Activated naive CD4-positive, alpha-beta T cell treated with anti-CD3 and anti-CD28 coated beads for 36 hours (primary cell): ENCODE measurements at regions of chrX and their contacts with region 1.

Region 1: DNA sequence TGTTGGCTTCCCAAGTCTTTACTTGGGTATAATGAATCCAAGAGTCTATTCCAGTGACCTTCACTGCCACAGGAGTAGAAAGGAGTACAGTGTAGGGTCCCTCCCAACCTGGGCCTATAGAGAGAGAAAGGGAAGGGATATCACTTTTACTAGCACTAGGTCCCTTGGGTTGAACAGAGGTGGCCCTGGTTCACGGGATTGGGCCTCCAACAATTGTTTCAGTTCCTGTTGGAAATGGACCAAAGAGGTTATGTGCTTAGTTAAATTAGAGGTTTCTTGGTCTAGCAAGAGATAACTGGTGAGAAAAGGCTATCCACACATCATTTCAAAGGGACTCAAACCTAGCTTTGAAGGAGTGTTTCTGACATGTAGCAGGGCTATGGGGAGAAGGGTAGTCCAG is 57.1 kb upstream of the MED14 start:
- DNase-seq: no peak
- H3K4me3 Mint-ChIP-seq: no peak overlapping the region
- H3K27ac Mint-ChIP-seq: no peak overlapping the region
- H3K4me1 Mint-ChIP-seq: peaks cover 1% of the 10 kb centered on the region
- H3K27me3 Mint-ChIP-seq: no peaks in the 10 kb centered on the region

Region 2: DNA sequence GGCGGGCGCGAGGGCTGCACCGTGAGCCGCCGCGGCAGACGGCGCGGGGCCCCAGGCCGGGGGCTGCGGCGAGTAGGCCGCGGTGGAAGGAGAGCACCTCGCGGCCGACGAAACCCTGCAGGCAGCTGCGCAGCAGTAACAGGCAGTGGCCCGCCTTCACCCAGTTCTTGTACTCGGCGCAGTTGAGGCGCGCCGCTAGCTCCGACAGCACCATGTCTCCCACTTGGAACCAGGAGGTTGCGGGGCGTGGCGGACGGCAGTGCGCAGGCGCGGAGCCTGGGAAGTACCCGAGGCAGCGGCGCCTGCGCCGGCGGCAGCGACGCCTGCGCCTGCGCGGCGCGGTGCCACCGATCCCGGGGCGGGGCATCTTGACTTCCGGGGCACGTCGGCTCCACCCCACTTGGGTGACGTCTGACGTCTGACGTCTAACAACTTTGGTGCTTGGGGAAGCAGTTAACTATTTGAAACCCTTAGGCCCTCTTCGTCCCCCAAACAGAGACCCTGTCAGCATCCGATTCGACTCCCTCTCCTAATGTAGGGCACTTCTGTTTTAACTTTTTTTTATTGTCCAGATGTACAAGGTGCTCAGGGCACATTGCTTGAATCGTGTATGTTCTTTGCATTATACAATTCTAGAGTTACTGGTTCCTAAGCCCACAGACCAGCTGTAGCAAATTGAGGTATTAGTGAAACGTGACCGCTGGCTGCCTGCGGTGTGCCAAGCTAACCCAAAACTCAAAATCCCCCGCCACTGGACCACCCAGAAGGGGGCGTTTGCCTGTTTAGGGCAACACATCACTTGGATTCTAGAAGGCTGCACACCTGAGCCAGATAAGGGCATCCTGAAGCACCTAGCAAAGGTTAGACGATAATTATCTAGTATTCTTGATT is 144.9 kb before region 1 on chrX and contains the start of gene CXorf38:
- CTCF ChIA-PET with region 1: interaction called, 68 read pairs
- intact Hi-C with region 1: loop called (anchors 1 kb)
- DNase-seq: peak; percentile 94
- H3K4me3 Mint-ChIP-seq: peak within 1 kb of the TSS; percentile 84
- H3K27ac Mint-ChIP-seq: peak within 1 kb of the TSS; percentile 91
- H3K4me1 Mint-ChIP-seq: peaks cover 25% of the 10 kb centered on the region
- H3K27me3 Mint-ChIP-seq: no peaks in the 10 kb centered on the region
- total RNA-seq, gene CXorf38: 23.2 to 23.3 TPM

Region 3: DNA sequence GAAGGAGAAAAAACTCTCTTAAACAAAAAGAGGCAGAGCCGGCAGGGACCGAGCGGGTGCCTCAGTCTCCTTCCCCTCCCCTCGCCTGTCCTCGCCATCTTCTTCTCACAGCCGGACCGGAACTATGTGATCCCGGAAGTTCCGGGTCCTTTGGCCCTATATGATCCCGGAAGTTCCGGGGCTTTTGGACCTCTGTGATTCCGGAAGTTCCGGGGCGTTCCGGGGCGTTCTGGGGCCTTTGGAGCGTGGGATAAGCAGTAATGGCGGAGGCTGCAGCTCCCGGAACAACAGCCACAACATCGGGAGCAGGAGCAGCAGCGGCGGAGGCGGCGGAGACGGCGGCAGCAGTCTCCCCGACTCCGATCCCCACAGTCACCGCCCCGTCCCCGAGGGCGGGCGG is 41.8 kb after region 1 on chrX:
- CTCF ChIA-PET with region 1: no interaction called
- intact Hi-C with region 1: no loop called
- DNase-seq: no peak
- H3K4me3 Mint-ChIP-seq: no peak overlapping the region
- H3K27ac Mint-ChIP-seq: no peak overlapping the region
- H3K4me1 Mint-ChIP-seq: no peaks in the 10 kb centered on the region
- H3K27me3 Mint-ChIP-seq: no peaks in the 10 kb centered on the region

Region 4: DNA sequence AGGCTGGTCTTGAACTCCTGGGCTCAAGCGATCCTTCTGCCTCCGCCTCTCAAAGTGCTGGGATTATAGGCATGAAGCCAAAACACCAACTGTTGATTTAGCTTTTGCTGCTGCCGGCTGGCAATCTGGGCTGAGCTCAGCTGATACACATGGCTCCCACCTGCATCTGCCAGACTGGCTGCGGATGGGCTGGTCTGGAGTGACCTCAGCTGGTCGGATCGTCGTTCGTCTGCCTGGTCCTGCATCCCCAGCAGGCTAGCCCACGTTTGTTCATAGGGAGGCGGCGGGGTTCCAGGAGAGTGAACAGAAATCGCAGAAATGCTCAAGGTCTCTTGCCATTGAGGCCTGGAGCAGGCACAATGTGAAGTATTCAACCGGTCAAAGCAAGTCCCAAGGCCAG is 467.1 kb after region 1 on chrX:
- CTCF ChIA-PET with region 1: no interaction called
- intact Hi-C with region 1: loop called (anchors 10 kb)
- DNase-seq: no peak
- H3K4me3 Mint-ChIP-seq: no peak overlapping the region
- H3K27ac Mint-ChIP-seq: no peak overlapping the region
- H3K4me1 Mint-ChIP-seq: no peaks in the 10 kb centered on the region
- H3K27me3 Mint-ChIP-seq: no peaks in the 10 kb centered on the region